ENCODE measurements at regions of chr1 and their contacts with region 1.

Region 1: GRCh38 chr1:36134505-36135329 is 9.7 kb upstream of the COL8A2 start:
- DNase-seq: no peak
- ATAC-seq: peak; percentile 67
- H3K4me3 Mint-ChIP-seq: no peak overlapping the region
- H3K27ac Mint-ChIP-seq: no peak overlapping the region
- H3K4me1 Mint-ChIP-seq: no peaks in the 10 kb centered on the region
- H3K27me3 Mint-ChIP-seq: no peaks in the 10 kb centered on the region
- CTCF ChIP-seq: no peak

Region 2: GRCh38 chr1:35958558-35958957 is 176.2 kb before region 1 on chr1:
- CTCF ChIA-PET with region 1: no interaction called
- POLR2A ChIA-PET with region 1: no interaction called
- intact Hi-C with region 1: no loop called
- DNase-seq: no peak
- ATAC-seq: no peak
- H3K4me3 Mint-ChIP-seq: no peak overlapping the region
- H3K27ac Mint-ChIP-seq: no peak overlapping the region
- H3K4me1 Mint-ChIP-seq: no peaks in the 10 kb centered on the region
- H3K27me3 Mint-ChIP-seq: no peaks in the 10 kb centered on the region
- CTCF ChIP-seq: no peak

Region 3: GRCh38 chr1:36123356-36123755 is 11.4 kb before region 1 on chr1:
- CTCF ChIA-PET with region 1: interaction called, 11 read pairs
- POLR2A ChIA-PET with region 1: no interaction called
- intact Hi-C with region 1: no loop called
- DNase-seq: peak; percentile 26
- ATAC-seq: peak; percentile 80
- H3K4me3 Mint-ChIP-seq: peak overlapping the region; percentile 62
- H3K27ac Mint-ChIP-seq: peak overlapping the region; percentile 10
- H3K4me1 Mint-ChIP-seq: peaks cover 30% of the 10 kb centered on the region
- H3K27me3 Mint-ChIP-seq: peaks cover 12% of the 10 kb centered on the region
- CTCF ChIP-seq: no peak